ENCODE measurements at regions of chr12 and their contacts with region 1.

Region 1: DNA sequence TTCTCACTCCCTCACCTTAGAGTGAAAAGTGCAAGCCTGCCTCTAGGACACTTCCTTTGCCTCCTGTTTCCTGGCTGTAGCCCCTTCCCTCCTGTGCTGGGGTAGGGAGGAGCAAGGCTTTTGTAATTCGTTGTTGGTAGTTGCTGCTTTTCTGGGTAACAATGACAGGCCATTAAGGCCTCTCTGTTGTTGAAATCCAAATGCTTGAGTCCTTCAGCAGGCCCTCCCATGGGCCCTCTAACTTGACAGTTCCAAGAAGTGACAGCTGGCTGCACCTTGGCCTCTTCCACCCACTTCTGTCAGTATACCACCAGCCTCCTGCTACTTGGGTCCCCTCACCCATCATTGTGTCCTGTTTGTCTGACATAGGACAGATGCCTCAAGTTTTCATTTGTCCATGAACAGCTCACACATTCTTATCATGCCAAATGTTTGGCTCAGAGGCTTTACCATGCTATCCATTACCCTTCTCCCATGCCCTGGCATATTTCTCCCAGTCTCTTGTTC is 103.7 kb upstream of the PDE3A start:
- DNase-seq: no peak
- H3K4me3 ChIP-seq: no peak overlapping the region
- H3K27ac ChIP-seq: no peak overlapping the region
- H3K4me1 ChIP-seq: peaks cover 0 to 15% (median 8%) of the 10 kb centered on the region in 4 donors
- H3K27me3 ChIP-seq: no peaks in the 10 kb centered on the region
- CTCF ChIP-seq: no peak
- EP300 ChIP-seq: no peak
- POLR2A ChIP-seq: no peak

Region 2: DNA sequence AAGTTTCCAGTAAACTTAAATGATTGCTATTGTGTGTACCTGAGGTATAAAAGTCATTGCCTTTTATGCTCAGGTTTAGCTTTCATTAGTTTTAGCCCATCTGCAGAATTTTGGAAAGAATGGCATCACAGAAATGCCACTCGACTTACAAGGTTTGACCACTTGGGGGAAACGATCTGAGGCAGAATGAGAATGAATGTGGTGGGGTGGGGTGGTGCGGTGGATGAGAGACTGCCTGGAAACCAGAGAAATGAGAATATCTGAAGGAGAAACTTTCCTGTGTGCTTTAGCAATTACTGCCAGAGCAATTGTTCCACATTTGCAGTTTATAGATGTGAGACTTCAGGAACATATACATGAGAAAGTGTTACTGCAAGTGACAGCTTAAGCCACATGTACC is 121.7 kb before region 1 on chr12:
- intact Hi-C with region 1: loop called (anchors 10 kb)
- DNase-seq: no peak
- H3K4me3 ChIP-seq: no peak overlapping the region
- H3K27ac ChIP-seq: peak overlapping the region in 1 of 4 donors; percentile 27
- H3K4me1 ChIP-seq: peaks cover 0 to 14% (median 12%) of the 10 kb centered on the region in 4 donors
- H3K27me3 ChIP-seq: no peaks in the 10 kb centered on the region
- CTCF ChIP-seq: no peak
- EP300 ChIP-seq: no peak
- POLR2A ChIP-seq: no peak